HEK293 (cell line): ENCODE measurements at regions of chr3 and their contacts with region 1.

Region 1: GRCh38 chr3:138923531-138923994 is 23.4 kb downstream of the FOXL2 start:
- H3K4me3 ChIP-seq: no peak overlapping the region
- H3K27ac ChIP-seq: no peak overlapping the region
- H3K4me1 ChIP-seq: no peaks in the 10 kb centered on the region
- CTCF ChIP-seq: no peak

Region 2: GRCh38 chr3:138417559-138417982 is 506.0 kb before region 1 on chr3:
- CTCF ChIA-PET with region 1: interaction called, 13 read pairs
- POLR2A ChIA-PET with region 1: no interaction called
- H3K4me3 ChIP-seq: no peak overlapping the region
- H3K27ac ChIP-seq: no peak overlapping the region
- H3K4me1 ChIP-seq: no peaks in the 10 kb centered on the region
- CTCF ChIP-seq: peak; percentile 68

Region 3: DNA sequence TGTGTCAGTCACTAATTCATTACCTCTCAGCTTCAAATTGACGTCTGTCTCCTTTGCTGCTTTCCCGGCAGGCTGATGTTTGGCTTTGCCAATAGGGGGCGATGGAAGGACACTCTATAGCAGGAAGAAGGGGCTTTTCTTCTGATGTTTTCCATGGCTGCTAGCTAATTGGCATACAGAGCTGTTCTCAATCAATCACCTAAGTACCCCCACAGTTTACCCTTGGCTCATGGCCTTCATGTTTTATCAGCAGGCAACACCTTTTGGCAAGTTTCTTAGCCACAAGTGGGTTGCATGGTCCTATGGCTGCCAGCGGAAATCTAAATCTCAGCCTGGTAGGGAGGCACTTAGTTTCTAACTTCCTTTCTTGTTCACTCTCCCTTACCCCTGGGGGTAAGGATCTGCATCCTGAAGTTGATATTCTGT is 444.1 kb before region 1 on chr3:
- CTCF ChIA-PET with region 1: interaction called, 22 read pairs
- POLR2A ChIA-PET with region 1: no interaction called
- H3K4me3 ChIP-seq: no peak overlapping the region
- H3K27ac ChIP-seq: no peak overlapping the region
- H3K4me1 ChIP-seq: no peaks in the 10 kb centered on the region
- CTCF ChIP-seq: no peak; the same call in 1 of the 2 replicates

Region 4: GRCh38 chr3:138594150-138594934 is 329.2 kb before region 1 on chr3 and contains the start of gene CEP70:
- CTCF ChIA-PET with region 1: interaction called, 42 read pairs
- POLR2A ChIA-PET with region 1: interaction called, 5 read pairs
- H3K4me3 ChIP-seq: peak within 1 kb of the TSS; percentile 89
- H3K27ac ChIP-seq: peak within 1 kb of the TSS; percentile 59
- H3K4me1 ChIP-seq: no peaks in the 10 kb centered on the region
- CTCF ChIP-seq: peak; percentile 89

Region 5: GRCh38 chr3:138694287-138695007 is 229.1 kb before region 1 on chr3:
- CTCF ChIA-PET with region 1: interaction called, 23 read pairs
- POLR2A ChIA-PET with region 1: no interaction called
- H3K4me3 ChIP-seq: no peak overlapping the region
- H3K27ac ChIP-seq: no peak overlapping the region
- H3K4me1 ChIP-seq: peaks cover 10% of the 10 kb centered on the region
- CTCF ChIP-seq: no peak

Region 6: GRCh38 chr3:138898301-138898700 is 25.3 kb before region 1 on chr3:
- CTCF ChIA-PET with region 1: no interaction called
- POLR2A ChIA-PET with region 1: no interaction called
- H3K4me3 ChIP-seq: no peak overlapping the region
- H3K27ac ChIP-seq: no peak overlapping the region
- H3K4me1 ChIP-seq: no peaks in the 10 kb centered on the region
- CTCF ChIP-seq: no peak

Region 7: GRCh38 chr3:138935848-138936740 is 12.5 kb after region 1 on chr3:
- CTCF ChIA-PET with region 1: interaction called, 30 read pairs
- POLR2A ChIA-PET with region 1: interaction called, 3 read pairs
- H3K4me3 ChIP-seq: peak overlapping the region; percentile 49
- H3K27ac ChIP-seq: no peak overlapping the region
- H3K4me1 ChIP-seq: no peaks in the 10 kb centered on the region
- CTCF ChIP-seq: peak; percentile 88

Region 8: DNA sequence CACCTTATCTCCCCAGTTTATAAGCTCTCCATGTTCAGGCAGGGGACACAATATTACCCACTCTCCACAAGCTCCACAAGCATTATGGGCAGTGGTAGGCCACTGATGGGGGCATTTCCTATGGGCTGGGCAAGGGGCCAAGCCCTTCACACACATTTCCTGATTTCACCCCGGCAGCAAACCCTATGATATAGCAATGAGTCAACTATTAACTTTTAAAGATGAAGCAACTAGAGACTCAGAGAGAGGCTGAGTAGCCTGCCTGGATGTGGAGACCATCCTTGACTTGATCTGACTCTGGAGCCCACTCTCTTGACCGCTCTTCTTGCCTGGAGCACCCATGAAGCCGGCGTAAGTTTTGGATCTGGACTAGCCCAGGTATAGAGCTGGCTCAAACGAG is 50.9 kb after region 1 on chr3:
- CTCF ChIA-PET with region 1: interaction called, 21 read pairs
- POLR2A ChIA-PET with region 1: no interaction called
- H3K4me3 ChIP-seq: no peak overlapping the region
- H3K27ac ChIP-seq: no peak overlapping the region
- H3K4me1 ChIP-seq: no peaks in the 10 kb centered on the region
- CTCF ChIP-seq: no peak